AG04449 (cell line): ENCODE measurements at regions of chr3 and their contacts with region 1.

Region 1: GRCh38 chr3:56997675-56998074 is 62.8 kb upstream of the SPATA12 start:
- DNase-seq: no peak
- H3K4me3 ChIP-seq: no peak overlapping the region
- CTCF ChIP-seq: no peak

Region 2: GRCh38 chr3:56702490-56703315 is 295.0 kb before region 1 on chr3:
- CTCF ChIA-PET with region 1: interaction called, 376 read pairs
- POLR2A ChIA-PET with region 1: no interaction called
- DNase-seq: peak; percentile 41
- H3K4me3 ChIP-seq: no peak overlapping the region
- CTCF ChIP-seq: peak; percentile 58

Region 3: GRCh38 chr3:56980798-56981390 is 16.8 kb before region 1 on chr3:
- CTCF ChIA-PET with region 1: interaction called, 61 read pairs
- POLR2A ChIA-PET with region 1: no interaction called
- DNase-seq: peak; percentile 88
- H3K4me3 ChIP-seq: no peak overlapping the region
- CTCF ChIP-seq: no peak

Region 4: GRCh38 chr3:57007513-57008460 is 10.1 kb after region 1 on chr3:
- CTCF ChIA-PET with region 1: interaction called, 91 read pairs
- POLR2A ChIA-PET with region 1: no interaction called
- DNase-seq: peak; percentile 34
- H3K4me3 ChIP-seq: no peak overlapping the region
- CTCF ChIP-seq: no peak

Region 5: DNA sequence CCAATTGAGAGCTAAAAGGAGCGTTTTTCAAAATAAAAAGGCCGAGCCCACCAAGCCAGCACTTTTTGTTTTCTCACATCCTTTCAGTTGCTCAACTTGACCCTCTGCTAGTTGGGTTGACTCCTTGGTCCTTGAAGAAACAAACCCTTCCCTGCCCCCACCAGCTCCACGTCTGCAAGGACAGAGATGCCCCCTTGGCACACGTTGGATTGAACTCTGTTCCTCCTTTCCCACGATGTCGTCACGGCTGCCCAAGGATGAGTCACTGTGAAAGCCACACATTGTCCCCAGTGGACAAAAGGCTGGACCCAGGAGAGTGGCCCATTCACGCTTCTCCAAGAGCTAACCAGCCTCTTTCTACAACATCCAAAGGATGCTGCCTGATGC is 19.8 kb after region 1 on chr3:
- CTCF ChIA-PET with region 1: interaction called, 12 read pairs
- POLR2A ChIA-PET with region 1: no interaction called
- DNase-seq: no peak
- H3K4me3 ChIP-seq: no peak overlapping the region
- CTCF ChIP-seq: no peak

Region 6: GRCh38 chr3:57169872-57170623 is 172.4 kb after region 1 on chr3:
- CTCF ChIA-PET with region 1: interaction called, 10 read pairs
- POLR2A ChIA-PET with region 1: interaction called, 3 read pairs
- DNase-seq: no peak
- H3K4me3 ChIP-seq: peak overlapping the region; percentile 50
- CTCF ChIP-seq: peak; percentile 85

Region 7: GRCh38 chr3:57221883-57222282 is 224.2 kb after region 1 on chr3:
- CTCF ChIA-PET with region 1: interaction called, 27 read pairs
- POLR2A ChIA-PET with region 1: no interaction called
- DNase-seq: no peak
- H3K4me3 ChIP-seq: no peak overlapping the region
- CTCF ChIP-seq: no peak